Endothelial cell of umbilical vein (primary cell): ENCODE measurements at regions of chr9 and their contacts with region 1.

Region 1: DNA sequence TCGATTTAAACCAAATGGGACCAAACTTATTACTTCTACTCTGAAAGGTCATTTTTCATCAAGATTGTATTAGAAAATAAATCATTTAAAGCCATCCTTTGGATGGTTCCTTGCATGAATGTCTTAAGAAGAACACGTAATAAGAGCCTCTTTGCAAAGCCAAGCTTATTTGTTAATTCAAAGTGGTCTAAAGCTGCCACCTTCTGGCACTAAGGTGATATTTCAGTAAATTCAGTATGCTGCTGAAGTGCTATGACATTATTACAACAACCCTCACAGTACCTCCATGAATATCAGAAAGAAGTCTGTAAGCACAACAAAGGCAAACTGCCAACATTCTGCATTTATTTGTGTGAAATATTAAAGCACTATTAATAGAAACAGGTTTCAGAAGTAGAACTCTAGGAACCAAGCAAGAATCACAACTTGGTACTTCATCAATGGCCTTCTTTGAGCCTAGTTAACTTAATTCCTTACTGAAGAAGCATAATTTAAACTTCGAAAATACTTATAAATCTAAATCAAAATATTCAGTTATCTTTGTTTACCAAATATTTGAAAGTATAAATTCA is 53.1 kb upstream of the TYRP1 start:
- DNase-seq: peak; percentile 64
- H3K4me3 ChIP-seq: no peak overlapping the region
- H3K27ac ChIP-seq: no peak overlapping the region
- H3K4me1 ChIP-seq: no peaks in the 10 kb centered on the region
- H3K27me3 ChIP-seq: peaks cover 3 to 5% of the 10 kb centered on the region in 2 experiments
- CTCF ChIP-seq: peak in 1 of 2 donors; percentile 31
- POLR2A ChIP-seq: no peak

Region 2: GRCh38 chr9:12329623-12329985 is 310.5 kb before region 1 on chr9:
- CTCF ChIA-PET with region 1: interaction called, 15 read pairs
- POLR2A ChIA-PET with region 1: no interaction called
- dilution Hi-C with region 1: no loop called
- intact Hi-C with region 1: loop called (anchors 2 kb)
- DNase-seq: no peak
- H3K4me3 ChIP-seq: no peak overlapping the region
- H3K27ac ChIP-seq: no peak overlapping the region
- H3K4me1 ChIP-seq: no peaks in the 10 kb centered on the region
- H3K27me3 ChIP-seq: no peaks in the 10 kb centered on the region
- CTCF ChIP-seq: no peak
- POLR2A ChIP-seq: no peak

Region 3: DNA sequence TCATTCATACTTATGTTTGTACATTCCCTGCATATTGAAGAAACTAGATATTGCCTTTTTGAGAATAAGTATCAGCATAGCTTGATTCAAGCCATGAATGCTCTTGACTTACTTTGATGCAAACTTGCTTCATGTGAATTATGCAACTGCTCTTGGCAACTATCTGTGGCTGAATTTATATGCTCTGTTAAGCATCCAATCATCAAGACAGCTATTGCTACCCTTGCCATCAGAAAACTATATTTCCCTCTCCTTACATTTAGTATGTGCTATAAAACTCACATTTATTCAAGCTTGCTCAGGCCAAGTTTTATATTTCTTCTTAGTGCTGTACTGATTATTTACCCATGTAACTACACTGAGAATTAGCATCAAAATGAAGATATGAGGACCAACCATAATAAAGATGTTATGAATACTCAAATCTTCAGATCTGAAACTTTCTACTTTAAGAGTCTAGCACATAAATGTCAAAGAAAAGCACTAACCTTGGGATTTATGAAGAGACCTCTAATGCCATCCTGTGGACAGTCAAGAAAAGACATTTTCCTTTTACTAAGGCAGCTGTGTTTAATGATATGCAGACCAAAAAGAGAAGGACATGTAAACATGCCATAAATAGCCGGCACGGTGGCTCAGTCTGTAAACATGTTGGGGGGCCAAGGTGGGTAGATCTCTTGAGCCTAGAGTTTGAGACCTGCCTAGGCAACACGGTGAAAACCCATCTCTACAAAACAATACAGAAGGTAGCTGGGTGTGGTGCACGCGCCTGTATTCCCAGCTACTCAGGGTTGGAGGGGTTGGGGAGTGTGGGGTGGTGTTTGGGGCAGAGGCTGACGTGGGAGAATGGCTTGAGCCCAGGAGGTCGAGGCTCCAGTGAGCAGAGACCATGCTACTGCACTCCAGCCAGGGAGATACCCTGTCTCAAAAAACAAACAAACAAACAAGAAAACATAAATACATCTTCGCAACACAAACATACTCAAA is 213.9 kb before region 1 on chr9:
- CTCF ChIA-PET with region 1: interaction called, 10 read pairs
- POLR2A ChIA-PET with region 1: no interaction called
- dilution Hi-C with region 1: no loop called
- intact Hi-C with region 1: no loop called
- DNase-seq: peak; percentile 64
- H3K4me3 ChIP-seq: no peak overlapping the region
- H3K27ac ChIP-seq: no peak overlapping the region
- H3K4me1 ChIP-seq: peaks cover 27% of the 10 kb centered on the region
- H3K27me3 ChIP-seq: no peaks in the 10 kb centered on the region
- CTCF ChIP-seq: peak; percentile 21 to 22
- POLR2A ChIP-seq: no peak

Region 4: DNA sequence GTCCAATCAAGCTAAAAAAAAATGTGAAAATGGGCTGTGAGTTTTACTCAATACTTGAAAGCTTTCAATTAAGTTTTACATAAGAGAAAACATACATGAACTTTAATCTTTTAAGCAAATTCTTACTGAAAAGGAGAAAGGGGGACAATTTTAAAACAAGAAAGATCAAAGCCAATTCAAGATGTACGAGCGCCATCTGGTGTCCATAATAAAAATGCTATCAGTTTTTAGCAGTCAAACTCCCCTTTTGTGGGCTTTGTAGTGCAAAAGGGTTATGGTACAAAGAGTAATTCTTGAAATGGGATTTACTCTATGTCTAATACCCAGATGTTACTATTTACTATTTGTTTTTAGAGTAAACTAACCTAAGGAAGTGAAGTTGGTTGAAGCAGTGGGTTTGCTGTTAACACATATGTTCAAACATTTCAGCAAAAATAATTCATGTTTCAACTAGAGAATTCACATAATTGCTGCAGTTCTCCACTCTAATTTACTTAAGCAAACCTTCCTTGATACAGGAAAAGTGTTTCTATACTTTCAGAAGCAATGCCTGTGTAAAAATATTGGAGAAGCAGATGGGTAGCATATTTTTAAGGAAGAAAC is 175.1 kb before region 1 on chr9:
- CTCF ChIA-PET with region 1: no interaction called
- POLR2A ChIA-PET with region 1: no interaction called
- dilution Hi-C with region 1: no loop called
- intact Hi-C with region 1: loop called (anchors 5 kb)
- DNase-seq: peak; percentile 42
- H3K4me3 ChIP-seq: no peak overlapping the region
- H3K27ac ChIP-seq: no peak overlapping the region
- H3K4me1 ChIP-seq: no peaks in the 10 kb centered on the region
- H3K27me3 ChIP-seq: peaks cover 0 to 3% of the 10 kb centered on the region in 2 experiments
- CTCF ChIP-seq: peak; percentile 33 to 41
- POLR2A ChIP-seq: no peak

Region 5: GRCh38 chr9:12554636-12555035 is 85.5 kb before region 1 on chr9:
- CTCF ChIA-PET with region 1: interaction called, 33 read pairs
- POLR2A ChIA-PET with region 1: no interaction called
- dilution Hi-C with region 1: no loop called
- intact Hi-C with region 1: loop called (anchors 2 kb)
- DNase-seq: peak; percentile 32
- H3K4me3 ChIP-seq: no peak overlapping the region
- H3K27ac ChIP-seq: no peak overlapping the region
- H3K4me1 ChIP-seq: no peaks in the 10 kb centered on the region
- H3K27me3 ChIP-seq: peaks cover 0 to under 1% of the 10 kb centered on the region in 2 experiments
- CTCF ChIP-seq: peak in 1 of 2 donors; percentile 7
- POLR2A ChIP-seq: no peak

Region 6: DNA sequence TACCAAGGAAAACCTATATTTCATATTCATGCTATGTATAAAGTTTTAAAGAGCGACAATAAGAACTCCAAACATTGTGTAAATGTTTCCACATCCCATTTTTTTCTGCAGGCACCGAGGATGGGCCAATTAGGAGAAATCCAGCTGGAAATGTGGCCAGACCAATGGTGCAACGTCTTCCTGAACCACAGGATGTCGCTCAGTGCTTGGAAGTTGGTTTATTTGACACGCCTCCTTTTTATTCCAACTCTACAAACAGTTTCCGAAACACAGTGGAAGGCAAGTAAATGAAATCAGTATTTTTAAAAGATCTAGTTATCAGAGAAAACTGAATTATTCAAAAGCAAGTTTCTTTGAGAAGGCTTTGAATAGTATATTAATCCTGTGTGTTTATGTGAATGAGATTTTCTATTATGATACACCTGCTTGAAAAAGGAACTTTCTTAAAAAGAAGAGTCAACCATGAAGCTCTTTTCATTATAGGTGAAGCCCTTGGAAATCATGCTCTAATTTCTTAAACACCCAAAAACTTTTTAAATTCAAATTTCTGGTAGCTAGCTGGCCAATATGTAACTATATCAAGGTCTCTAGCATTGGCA is 62.2 kb after region 1 on chr9:
- CTCF ChIA-PET with region 1: interaction called, 14 read pairs
- POLR2A ChIA-PET with region 1: no interaction called
- dilution Hi-C with region 1: no loop called
- intact Hi-C with region 1: no loop called
- DNase-seq: peak; percentile 70
- H3K4me3 ChIP-seq: no peak overlapping the region
- H3K27ac ChIP-seq: no peak overlapping the region
- H3K4me1 ChIP-seq: no peaks in the 10 kb centered on the region
- H3K27me3 ChIP-seq: no peaks in the 10 kb centered on the region
- CTCF ChIP-seq: peak; percentile 58 to 62
- POLR2A ChIP-seq: no peak